Mucosa of descending colon (tissue), 3 donors: ENCODE measurements at regions of chr13 and their contacts with region 1.

Region 1: DNA sequence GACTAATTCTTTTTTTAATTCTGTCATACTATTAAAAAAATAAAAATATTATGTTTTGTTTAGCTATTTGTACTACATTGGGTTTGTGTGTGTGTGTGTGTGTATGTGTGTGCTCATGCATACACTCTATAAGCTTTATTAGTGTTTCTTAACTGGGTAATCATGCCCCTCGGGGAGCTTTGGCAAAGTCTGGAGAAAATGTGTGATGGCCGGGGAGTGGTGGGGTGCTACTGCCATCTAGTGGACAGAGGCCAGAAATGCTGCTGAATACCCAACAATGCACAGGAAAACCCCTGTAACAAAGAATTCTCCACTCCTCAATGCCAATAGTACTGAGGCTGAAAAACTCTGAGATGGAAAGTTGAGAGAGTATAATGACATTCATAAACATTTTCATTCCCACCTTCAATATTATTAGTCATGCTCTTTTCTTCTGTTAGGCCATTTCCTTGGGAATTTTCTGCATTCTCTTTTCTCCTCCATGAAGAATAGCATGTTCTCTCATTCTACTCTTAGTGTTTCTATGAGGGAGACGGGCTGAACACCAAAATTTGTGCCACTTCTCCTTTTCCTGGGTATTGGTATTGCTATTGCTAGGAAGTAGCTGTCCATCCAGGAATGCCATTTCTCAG is 157.3 kb downstream of the DNAJC3 start:
- DNase-seq: peak in 2 of 3 donors; percentile 57 to 70
- ATAC-seq: peak; percentile 95
- H3K4me3 ChIP-seq: no peak overlapping the region
- H3K4me1 ChIP-seq: no peaks in the 10 kb centered on the region
- CTCF ChIP-seq: peak; percentile 90

Region 2: DNA sequence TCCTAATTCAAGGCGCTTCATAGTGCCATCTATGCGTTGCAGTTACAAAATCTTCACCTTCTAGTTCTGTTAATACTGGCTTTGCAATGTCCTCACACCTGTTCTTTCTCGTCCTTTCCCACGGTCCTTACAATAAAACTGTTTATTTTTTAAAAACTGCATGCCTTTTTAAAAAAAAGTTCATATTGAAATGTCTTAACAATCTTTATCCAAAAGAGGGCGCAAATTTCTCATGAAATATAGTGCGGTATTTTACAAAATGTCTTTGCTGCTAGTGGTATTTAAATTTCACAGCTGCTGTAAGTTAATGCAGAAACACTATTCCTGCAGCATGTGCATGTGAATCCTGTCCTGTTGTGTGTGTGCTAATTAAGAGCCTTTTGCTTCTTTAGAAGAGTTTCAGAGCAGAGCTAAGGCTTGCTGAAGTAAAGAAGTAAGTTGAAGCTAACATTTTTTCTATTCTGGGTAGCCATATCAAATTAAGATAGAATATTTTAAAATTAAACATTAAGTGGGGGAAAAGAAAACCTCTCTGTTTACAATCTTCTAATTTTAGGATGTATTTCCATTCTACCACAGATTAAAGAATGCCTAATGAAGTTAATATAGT is 297.5 kb before region 1 on chr13:
- intact Hi-C with region 1: loop called in 1 of 2 experiments (anchors 5 kb)
- DNase-seq: no peak
- ATAC-seq: no peak
- H3K4me3 ChIP-seq: no peak overlapping the region
- H3K4me1 ChIP-seq: no peaks in the 10 kb centered on the region
- CTCF ChIP-seq: no peak

Region 3: DNA sequence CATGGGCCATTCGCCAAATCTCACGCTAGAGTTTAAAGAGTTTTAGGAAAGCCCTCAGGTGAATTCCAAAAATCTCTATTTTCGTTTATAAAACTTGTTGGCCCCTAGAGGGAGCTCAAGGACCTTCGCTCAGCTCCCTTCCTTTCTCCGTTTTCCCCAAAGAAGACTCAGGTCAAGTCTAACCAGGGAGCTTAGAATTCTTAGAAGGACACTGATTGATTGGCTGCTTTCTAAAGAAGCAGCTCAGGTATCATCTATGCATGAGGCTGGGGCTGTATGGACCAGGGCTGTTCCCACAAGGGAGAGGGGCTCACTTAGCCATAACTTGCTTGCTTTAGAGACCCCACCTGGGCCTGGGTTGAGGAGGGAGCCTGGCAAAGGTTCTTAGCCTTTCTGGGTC is 210.2 kb before region 1 on chr13:
- intact Hi-C with region 1: loop called (anchors 10 kb)
- DNase-seq: peak in 1 of 3 donors; percentile 32
- ATAC-seq: peak; percentile 73
- H3K4me3 ChIP-seq: no peak overlapping the region
- H3K4me1 ChIP-seq: peaks cover 7% of the 10 kb centered on the region
- CTCF ChIP-seq: peak; percentile 29

Region 4: GRCh38 chr13:95660981-95661581 is 173.2 kb before region 1 on chr13:
- intact Hi-C with region 1: no loop called
- DNase-seq: peak in 1 of 3 donors; percentile 57
- ATAC-seq: no peak
- H3K4me3 ChIP-seq: no peak overlapping the region
- H3K4me1 ChIP-seq: no peaks in the 10 kb centered on the region
- CTCF ChIP-seq: peak; percentile 15